H1 (cell line): ENCODE measurements at regions of chr2 and their contacts with region 1.

Region 1: GRCh38 chr2:10382354-10383061 is 65.6 kb downstream of the ODC1 start:
- DNase-seq: no peak
- H3K4me3 ChIP-seq: no peak overlapping the region
- H3K27ac ChIP-seq: no peak overlapping the region
- H3K4me1 ChIP-seq: peaks cover 3 to 17% (median 13%) of the 10 kb centered on the region in 4 experiments
- H3K27me3 ChIP-seq: no peaks in the 10 kb centered on the region
- CTCF ChIP-seq: no peak
- EP300 ChIP-seq: no peak
- POLR2A ChIP-seq: no peak
- RAD21 ChIP-seq: no peak

Region 2: GRCh38 chr2:10369269-10370255 is 12.9 kb before region 1 on chr2:
- CTCF ChIA-PET with region 1: interaction called, 42 read pairs
- POLR2A ChIA-PET with region 1: no interaction called
- DNase-seq: no peak
- H3K4me3 ChIP-seq: no peak overlapping the region
- H3K27ac ChIP-seq: no peak overlapping the region
- H3K4me1 ChIP-seq: no peaks in the 10 kb centered on the region
- H3K27me3 ChIP-seq: no peaks in the 10 kb centered on the region
- CTCF ChIP-seq: no peak
- EP300 ChIP-seq: no peak
- POLR2A ChIP-seq: no peak
- RAD21 ChIP-seq: no peak